ENCODE measurements at regions of chr10 and their contacts with region 1.

Region 1: GRCh38 chr10:113073549-113074189 is 123.6 kb downstream of the TCF7L2 start:
- DNase-seq: peak; percentile 97
- ATAC-seq: peak; percentile 80
- H3K4me3 ChIP-seq: peak overlapping the region; percentile 24
- H3K27ac ChIP-seq: peak overlapping the region; percentile 74
- H3K4me1 ChIP-seq: peaks cover 63 to 73% of the 10 kb centered on the region in 2 experiments
- H3K27me3 ChIP-seq: no peaks in the 10 kb centered on the region
- CTCF ChIP-seq: no peak
- POLR2A ChIP-seq: peak; percentile 77
- RAD21 ChIP-seq: no peak

Region 2: GRCh38 chr10:112389147-112389822 is 684.4 kb before region 1 on chr10:
- CTCF ChIA-PET with region 1: no interaction called
- POLR2A ChIA-PET with region 1: no interaction called
- RAD21 ChIA-PET with region 1: no interaction called
- intact Hi-C with region 1: loop called (anchors 5 kb)
- DNase-seq: peak; percentile 99
- ATAC-seq: peak; percentile 83
- H3K4me3 ChIP-seq: 0 out of 4 replicates have a peak overlapping the region, but pooled peaks of 1 of the 2 experiments have one; percentile 7
- H3K27ac ChIP-seq: peak overlapping the region; percentile 77
- H3K4me1 ChIP-seq: peaks cover 94 to 97% of the 10 kb centered on the region in 2 experiments
- H3K27me3 ChIP-seq: no peaks in the 10 kb centered on the region
- CTCF ChIP-seq: no peak
- POLR2A ChIP-seq: no peak
- RAD21 ChIP-seq: no peak

Region 3: GRCh38 chr10:112526139-112526538 is 547.5 kb before region 1 on chr10:
- CTCF ChIA-PET with region 1: no interaction called
- POLR2A ChIA-PET with region 1: interaction called, 3 read pairs
- RAD21 ChIA-PET with region 1: no interaction called
- intact Hi-C with region 1: loop called (anchors 5 kb)
- DNase-seq: no peak
- ATAC-seq: peak; percentile 5; the same call in 1 of the 2 replicates
- H3K4me3 ChIP-seq: peak overlapping the region in 1 of 2 experiments; percentile 33; a peak in 2 of 4 replicates
- H3K27ac ChIP-seq: peak overlapping the region; percentile 90
- H3K4me1 ChIP-seq: peaks cover 95 to 100% of the 10 kb centered on the region in 2 experiments
- H3K27me3 ChIP-seq: no peaks in the 10 kb centered on the region
- CTCF ChIP-seq: no peak
- POLR2A ChIP-seq: peak; percentile 54
- RAD21 ChIP-seq: no peak

Region 4: GRCh38 chr10:112565434-112566053 is 508.1 kb before region 1 on chr10:
- CTCF ChIA-PET with region 1: no interaction called
- POLR2A ChIA-PET with region 1: no interaction called
- RAD21 ChIA-PET with region 1: interaction called in 1 of 2 experiments, 6 read pairs
- intact Hi-C with region 1: loop called (anchors 10 kb)
- DNase-seq: peak; percentile 67
- ATAC-seq: peak; percentile 81
- H3K4me3 ChIP-seq: no peak overlapping the region
- H3K27ac ChIP-seq: peak overlapping the region; percentile 0; the same call in 1 of the 2 replicates
- H3K4me1 ChIP-seq: peaks cover 32 to 41% of the 10 kb centered on the region in 2 experiments
- H3K27me3 ChIP-seq: no peaks in the 10 kb centered on the region
- CTCF ChIP-seq: peak; percentile 81 to 90 (median 87)
- POLR2A ChIP-seq: no peak
- RAD21 ChIP-seq: peak; percentile 96

Region 5: DNA sequence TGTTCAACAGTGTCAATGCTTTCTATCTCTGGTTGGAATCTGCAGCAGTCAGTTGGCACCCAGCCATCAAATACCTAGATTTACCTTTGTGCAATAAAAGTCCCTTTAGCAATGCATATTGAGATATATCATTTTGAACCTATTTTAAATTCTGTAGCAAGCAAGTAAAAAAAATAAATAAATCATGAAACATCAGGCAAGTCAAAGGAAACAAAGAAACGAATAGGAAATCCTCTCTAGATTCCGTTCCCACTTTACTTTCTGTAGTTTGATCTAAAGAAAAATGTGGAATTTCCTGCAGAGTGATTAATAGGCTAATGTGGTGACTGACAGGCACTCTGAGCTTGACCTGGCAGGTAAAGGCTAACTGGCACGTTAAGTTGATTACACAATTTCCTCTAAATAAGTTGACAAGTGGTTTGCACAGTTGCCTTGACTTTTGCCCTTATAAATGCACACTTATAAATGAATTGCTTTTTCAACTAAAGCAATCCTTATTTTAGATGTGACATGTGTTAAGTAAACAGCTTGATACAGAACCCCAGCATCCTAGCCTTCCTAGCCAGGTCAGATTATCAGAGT is 331.7 kb before region 1 on chr10:
- CTCF ChIA-PET with region 1: no interaction called
- POLR2A ChIA-PET with region 1: no interaction called
- RAD21 ChIA-PET with region 1: no interaction called
- intact Hi-C with region 1: loop called (anchors 5 kb)
- DNase-seq: peak; percentile 52
- ATAC-seq: peak; percentile 64
- H3K4me3 ChIP-seq: peak overlapping the region in 1 of 2 experiments; percentile 3; a peak in 1 of 4 replicates
- H3K27ac ChIP-seq: peak overlapping the region; percentile 56
- H3K4me1 ChIP-seq: peaks cover 38 to 58% of the 10 kb centered on the region in 2 experiments
- H3K27me3 ChIP-seq: no peaks in the 10 kb centered on the region
- CTCF ChIP-seq: no peak
- POLR2A ChIP-seq: no peak
- RAD21 ChIP-seq: 0 out of 2 replicates have a peak, but pooled peaks have one; percentile 30

Region 6: GRCh38 chr10:113087165-113088029 is 13.7 kb after region 1 on chr10:
- CTCF ChIA-PET with region 1: interaction called, 7 read pairs
- POLR2A ChIA-PET with region 1: interaction called, 39 read pairs
- RAD21 ChIA-PET with region 1: interaction called in 1 of 2 experiments, 4 read pairs
- intact Hi-C with region 1: no loop called
- DNase-seq: peak; percentile 100
- ATAC-seq: peak; percentile 92
- H3K4me3 ChIP-seq: peak overlapping the region in 1 of 2 experiments; percentile 30; a peak in 2 of 4 replicates
- H3K27ac ChIP-seq: peak overlapping the region; percentile 92
- H3K4me1 ChIP-seq: peaks cover 93 to 95% of the 10 kb centered on the region in 2 experiments
- H3K27me3 ChIP-seq: no peaks in the 10 kb centered on the region
- CTCF ChIP-seq: no peak
- POLR2A ChIP-seq: no peak
- RAD21 ChIP-seq: no peak

Region 7: DNA sequence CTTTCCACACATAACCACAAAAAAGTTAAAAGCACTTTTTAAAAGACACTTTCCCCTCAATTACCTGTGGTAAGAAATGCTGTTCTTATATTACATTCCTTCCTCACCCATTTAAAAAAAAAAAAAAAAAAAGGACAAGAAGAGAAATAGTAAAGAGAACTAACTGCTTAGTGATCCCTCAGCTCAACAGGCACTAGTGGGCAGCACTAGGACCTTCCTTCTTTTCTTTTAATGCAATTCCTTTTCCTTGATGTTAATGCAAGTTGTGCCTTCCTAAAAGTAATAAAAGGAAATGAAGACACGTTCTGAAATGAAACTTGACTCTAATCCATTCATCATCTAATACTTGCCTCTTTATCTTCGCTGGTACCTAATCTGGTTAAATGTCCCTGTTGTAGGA is 66.0 kb after region 1 on chr10:
- CTCF ChIA-PET with region 1: no interaction called
- POLR2A ChIA-PET with region 1: no interaction called
- RAD21 ChIA-PET with region 1: no interaction called
- intact Hi-C with region 1: no loop called
- DNase-seq: no peak
- ATAC-seq: no peak
- H3K4me3 ChIP-seq: no peak overlapping the region
- H3K27ac ChIP-seq: no peak overlapping the region
- H3K4me1 ChIP-seq: peaks cover 5 to 8% of the 10 kb centered on the region in 2 experiments; a peak in 2 of 4 replicates
- H3K27me3 ChIP-seq: no peaks in the 10 kb centered on the region
- CTCF ChIP-seq: peak; percentile 16 to 40 (median 37); a peak in 3 of 6 replicates
- POLR2A ChIP-seq: no peak
- RAD21 ChIP-seq: peak; percentile 28; the same call in 1 of the 2 replicates